Left ventricle myocardium inferior (tissue), 1 donor: ENCODE measurements at regions of chr11 and their contacts with region 1.

Region 1: GRCh38 chr11:34051349-34052035 is at the start of gene CAPRIN1:
- DNase-seq: peak; percentile 88
- H3K4me3 ChIP-seq: peak within 1 kb of the TSS; percentile 92
- H3K27ac ChIP-seq: peak within 1 kb of the TSS; percentile 99
- H3K4me1 ChIP-seq: peaks cover 54% of the 10 kb centered on the region
- H3K27me3 ChIP-seq: no peaks in the 10 kb centered on the region
- CTCF ChIP-seq: peak; percentile 5
- total RNA-seq, gene CAPRIN1: 112 TPM

Region 2: DNA sequence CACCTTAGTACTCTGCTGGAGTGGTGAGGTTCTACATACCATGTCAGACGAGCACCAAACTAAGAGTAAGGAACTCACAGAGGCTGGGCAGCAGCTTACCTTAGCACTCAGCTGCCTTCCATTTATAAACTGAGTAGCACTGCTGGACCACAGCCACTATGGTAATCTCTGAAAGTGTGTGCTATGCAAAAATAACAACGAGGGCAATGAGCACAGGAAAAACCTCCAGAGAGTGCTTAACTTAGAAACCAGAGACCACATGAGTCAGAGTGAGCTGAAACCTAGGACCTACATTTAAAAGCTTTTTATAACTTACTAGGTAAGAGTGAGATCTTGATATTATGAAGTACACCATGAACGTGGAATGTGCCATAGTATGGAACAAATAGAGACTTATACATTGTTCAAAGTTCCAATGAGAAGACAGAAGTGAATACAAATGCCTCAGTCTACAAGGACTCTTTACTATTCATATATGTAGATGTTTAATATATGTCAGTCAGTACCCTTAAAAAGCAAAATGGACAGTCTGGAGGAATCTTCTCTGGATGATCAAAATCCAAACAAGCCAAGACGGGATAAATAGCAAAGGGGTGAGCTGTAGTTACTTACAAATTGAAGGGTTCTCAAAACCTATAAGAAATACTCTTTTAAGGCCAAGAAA is 298.1 kb before region 1 on chr11:
- intact Hi-C with region 1: no loop called
- DNase-seq: no peak
- H3K4me3 ChIP-seq: peak overlapping the region; percentile 47
- H3K27ac ChIP-seq: peak overlapping the region; percentile 73
- H3K4me1 ChIP-seq: peaks cover 24% of the 10 kb centered on the region
- H3K27me3 ChIP-seq: no peaks in the 10 kb centered on the region
- CTCF ChIP-seq: no peak

Region 3: GRCh38 chr11:34105079-34105956 is 53.8 kb after region 1 on chr11 and contains the start of gene NAT10:
- intact Hi-C with region 1: loop called (anchors 10 kb)
- DNase-seq: peak; percentile 96
- H3K4me3 ChIP-seq: peak within 1 kb of the TSS; percentile 90
- H3K27ac ChIP-seq: peak within 1 kb of the TSS; percentile 94
- H3K4me1 ChIP-seq: peaks cover 31% of the 10 kb centered on the region
- H3K27me3 ChIP-seq: no peaks in the 10 kb centered on the region
- CTCF ChIP-seq: peak; percentile 32
- total RNA-seq, gene NAT10: 22.3 TPM